PC-3 (cell line): ENCODE measurements at regions of chr3 and their contacts with region 1.

Region 1: GRCh38 chr3:180989291-180990163 is at the start of gene DNAJC19:
- DNase-seq: peak; percentile 98
- ATAC-seq: peak; percentile 95
- H3K4me3 ChIP-seq: peak within 1 kb of the TSS; percentile 81
- H3K27ac ChIP-seq: peak within 1 kb of the TSS; percentile 37
- H3K4me1 ChIP-seq: peaks cover 11% of the 10 kb centered on the region; the same call in 1 of the 2 replicates
- H3K27me3 ChIP-seq: 0 out of 2 replicates have a peak, but pooled peaks cover 12% of the 10 kb centered on the region
- CTCF ChIP-seq: no peak
- total RNA-seq, gene DNAJC19: 34.2 and 41.5 TPM in 2 replicates

Region 2: GRCh38 chr3:180250169-180250568 is 739.4 kb before region 1 on chr3:
- CTCF ChIA-PET with region 1: no interaction called
- POLR2A ChIA-PET with region 1: no interaction called
- intact Hi-C with region 1: no loop called
- DNase-seq: peak; percentile 95
- ATAC-seq: peak; percentile 88
- H3K4me3 ChIP-seq: no peak overlapping the region
- H3K27ac ChIP-seq: peak overlapping the region; percentile 58
- H3K4me1 ChIP-seq: peaks cover 46% of the 10 kb centered on the region
- H3K27me3 ChIP-seq: no peaks in the 10 kb centered on the region
- CTCF ChIP-seq: no peak

Region 3: DNA sequence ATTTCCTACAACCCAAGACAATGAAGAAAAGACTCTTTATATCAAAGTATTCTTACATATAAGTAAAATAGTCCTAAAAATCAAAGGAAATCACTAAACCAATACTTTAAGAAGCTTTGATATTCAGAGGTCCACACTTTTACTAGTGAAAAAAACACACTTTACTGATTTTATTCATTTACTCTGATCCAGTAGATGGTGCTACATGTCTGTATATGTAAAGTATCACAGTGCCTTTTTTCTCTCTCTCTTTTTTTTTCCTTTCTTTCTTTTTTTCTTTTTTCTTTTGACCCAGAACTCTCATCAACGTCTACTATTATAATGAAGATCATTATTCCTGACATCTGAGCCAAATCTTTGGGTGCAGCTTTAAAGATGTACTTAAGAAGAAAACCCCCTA is 299.5 kb before region 1 on chr3:
- CTCF ChIA-PET with region 1: no interaction called
- POLR2A ChIA-PET with region 1: no interaction called
- intact Hi-C with region 1: loop called (anchors 10 kb)
- DNase-seq: peak; percentile 17
- ATAC-seq: no peak
- H3K4me3 ChIP-seq: no peak overlapping the region
- H3K27ac ChIP-seq: no peak overlapping the region
- H3K4me1 ChIP-seq: no peaks in the 10 kb centered on the region
- H3K27me3 ChIP-seq: peaks cover 44% of the 10 kb centered on the region
- CTCF ChIP-seq: peak; percentile 55

Region 4: DNA sequence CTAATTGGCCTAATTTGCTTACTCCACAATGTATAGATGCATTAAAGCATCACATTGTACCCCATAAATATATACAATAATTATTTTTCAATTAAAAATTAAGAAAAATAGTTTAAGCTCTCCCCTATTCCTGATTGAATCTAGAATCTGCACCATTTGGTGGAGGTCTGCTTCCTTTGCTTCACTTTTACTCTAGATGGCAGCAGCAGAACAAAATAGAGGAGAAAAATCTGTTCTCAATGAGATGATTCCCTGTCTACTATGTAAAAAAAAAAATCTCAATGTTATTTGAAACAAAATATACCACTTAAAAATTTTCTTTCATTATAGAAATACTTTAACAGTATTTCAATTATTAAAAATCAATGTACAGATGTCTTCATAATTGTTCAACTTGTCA is 186.7 kb before region 1 on chr3:
- CTCF ChIA-PET with region 1: no interaction called
- POLR2A ChIA-PET with region 1: no interaction called
- intact Hi-C with region 1: loop called (anchors 10 kb)
- DNase-seq: peak; percentile 52
- ATAC-seq: peak; percentile 72
- H3K4me3 ChIP-seq: no peak overlapping the region
- H3K27ac ChIP-seq: no peak overlapping the region
- H3K4me1 ChIP-seq: no peaks in the 10 kb centered on the region
- H3K27me3 ChIP-seq: peaks cover 21% of the 10 kb centered on the region
- CTCF ChIP-seq: peak; percentile 60

Region 5: DNA sequence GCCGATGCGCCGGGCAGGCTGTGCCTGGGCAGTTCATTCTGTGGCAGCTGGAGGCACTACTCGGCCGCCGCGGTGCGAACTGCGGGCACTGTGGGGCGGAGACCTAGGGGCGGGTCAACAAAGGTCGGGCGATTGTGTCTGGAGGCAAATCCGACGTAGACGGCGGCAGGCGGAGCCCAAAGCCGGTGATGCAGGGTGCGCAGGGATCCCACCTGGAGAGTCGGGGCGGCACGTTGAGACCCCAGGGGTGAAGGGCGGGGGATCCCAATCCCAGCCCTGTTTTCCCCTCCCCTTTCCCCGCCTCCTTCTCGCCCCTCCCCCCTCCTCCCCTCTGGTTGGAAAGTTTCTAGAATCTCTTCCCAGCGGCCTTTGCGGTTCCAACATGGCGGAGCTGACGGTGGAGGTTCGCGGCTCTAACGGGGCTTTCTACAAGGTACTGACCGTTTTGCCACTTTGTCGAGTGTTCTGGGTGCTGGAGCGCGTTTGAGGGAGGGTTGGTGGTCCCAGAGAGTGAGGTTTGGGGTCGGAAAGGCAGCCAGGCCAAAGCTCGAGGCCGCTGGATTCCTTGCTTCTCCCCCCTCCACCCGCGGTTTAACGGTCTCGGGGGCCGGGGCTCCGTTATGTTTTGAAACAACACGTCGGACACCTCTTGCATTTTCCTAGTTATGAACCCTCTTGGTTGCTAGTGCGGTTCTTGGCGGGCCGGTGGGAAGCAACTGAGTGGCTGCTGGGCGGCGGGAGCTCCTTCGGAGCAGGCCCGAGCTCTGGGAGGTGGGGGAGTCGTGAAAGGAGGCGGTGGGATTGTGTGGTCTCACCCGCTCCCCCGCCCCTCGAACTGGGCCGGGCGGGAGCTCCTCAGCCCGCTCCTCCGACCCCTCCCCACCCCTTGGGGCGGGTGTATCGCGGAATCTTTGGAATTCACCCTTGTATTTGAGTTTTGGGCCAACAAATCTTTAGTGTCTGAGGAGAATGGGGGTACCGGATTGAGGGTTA is 76.9 kb before region 1 on chr3 and contains the start of gene FXR1:
- CTCF ChIA-PET with region 1: no interaction called
- POLR2A ChIA-PET with region 1: no interaction called
- intact Hi-C with region 1: loop called (anchors 5 kb)
- DNase-seq: peak; percentile 83
- ATAC-seq: peak; percentile 99
- H3K4me3 ChIP-seq: peak within 1 kb of the TSS; percentile 100
- H3K27ac ChIP-seq: peak within 1 kb of the TSS; percentile 57
- H3K4me1 ChIP-seq: peaks cover 24% of the 10 kb centered on the region
- H3K27me3 ChIP-seq: no peaks in the 10 kb centered on the region
- CTCF ChIP-seq: peak; percentile 58
- total RNA-seq, gene FXR1: 124 and 133 TPM in 2 replicates

Region 6: DNA sequence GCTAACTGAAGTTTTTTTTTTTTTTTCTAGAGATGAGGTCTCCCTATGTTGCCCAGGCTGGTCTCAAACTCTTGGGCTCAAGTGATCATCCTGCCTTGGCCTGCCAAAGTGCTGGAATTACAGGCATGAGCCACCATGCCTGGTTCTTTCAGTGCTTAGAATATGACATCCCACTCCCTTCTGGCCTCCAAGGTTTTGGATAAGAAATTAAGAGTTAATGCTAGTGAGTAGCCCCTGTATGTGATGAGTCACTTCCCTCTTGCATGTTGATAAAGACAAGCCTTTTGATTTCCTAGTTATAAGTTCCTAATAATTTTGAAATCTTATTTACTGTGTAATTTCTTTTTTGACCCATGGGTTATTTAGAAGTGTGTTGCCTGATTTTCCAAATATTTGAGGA is 35.7 kb after region 1 on chr3:
- CTCF ChIA-PET with region 1: no interaction called
- POLR2A ChIA-PET with region 1: no interaction called
- intact Hi-C with region 1: no loop called
- DNase-seq: no peak
- ATAC-seq: no peak
- H3K4me3 ChIP-seq: no peak overlapping the region
- H3K27ac ChIP-seq: no peak overlapping the region
- H3K4me1 ChIP-seq: no peaks in the 10 kb centered on the region
- H3K27me3 ChIP-seq: no peaks in the 10 kb centered on the region
- CTCF ChIP-seq: no peak

Region 7: GRCh38 chr3:181075098-181075497 is 85.6 kb after region 1 on chr3:
- CTCF ChIA-PET with region 1: no interaction called
- POLR2A ChIA-PET with region 1: no interaction called
- intact Hi-C with region 1: no loop called
- DNase-seq: no peak
- ATAC-seq: no peak
- H3K4me3 ChIP-seq: no peak overlapping the region
- H3K27ac ChIP-seq: no peak overlapping the region
- H3K4me1 ChIP-seq: no peaks in the 10 kb centered on the region
- H3K27me3 ChIP-seq: peaks cover 17% of the 10 kb centered on the region
- CTCF ChIP-seq: no peak

Region 8: DNA sequence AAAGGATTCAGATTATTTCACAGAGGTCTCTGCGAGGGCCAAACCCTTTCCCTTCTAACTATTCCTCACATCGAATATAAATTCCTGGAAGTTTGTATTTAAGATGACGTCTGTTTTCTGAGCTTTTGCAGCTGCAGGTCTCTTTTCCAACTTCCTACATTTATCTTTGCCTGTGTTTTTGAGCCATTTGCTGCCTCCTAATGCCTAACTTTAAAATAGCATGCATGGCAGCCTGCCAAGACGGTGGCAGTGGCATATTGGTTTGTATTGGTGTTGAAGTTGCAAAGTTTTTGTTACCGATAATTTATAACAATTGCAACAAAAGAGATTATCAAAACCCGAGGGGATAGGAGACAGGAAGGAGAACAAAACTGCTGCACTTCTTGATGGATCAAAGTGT is 187.1 kb after region 1 on chr3:
- CTCF ChIA-PET with region 1: no interaction called
- POLR2A ChIA-PET with region 1: no interaction called
- intact Hi-C with region 1: loop called (anchors 10 kb)
- DNase-seq: peak; percentile 71
- ATAC-seq: no peak
- H3K4me3 ChIP-seq: no peak overlapping the region
- H3K27ac ChIP-seq: no peak overlapping the region
- H3K4me1 ChIP-seq: no peaks in the 10 kb centered on the region
- H3K27me3 ChIP-seq: peaks cover 50% of the 10 kb centered on the region
- CTCF ChIP-seq: peak; percentile 73